Naive thymus-derived CD4-positive, alpha-beta T cell (primary cell): ENCODE measurements at regions of chr22 and their contacts with region 1.

Region 1: DNA sequence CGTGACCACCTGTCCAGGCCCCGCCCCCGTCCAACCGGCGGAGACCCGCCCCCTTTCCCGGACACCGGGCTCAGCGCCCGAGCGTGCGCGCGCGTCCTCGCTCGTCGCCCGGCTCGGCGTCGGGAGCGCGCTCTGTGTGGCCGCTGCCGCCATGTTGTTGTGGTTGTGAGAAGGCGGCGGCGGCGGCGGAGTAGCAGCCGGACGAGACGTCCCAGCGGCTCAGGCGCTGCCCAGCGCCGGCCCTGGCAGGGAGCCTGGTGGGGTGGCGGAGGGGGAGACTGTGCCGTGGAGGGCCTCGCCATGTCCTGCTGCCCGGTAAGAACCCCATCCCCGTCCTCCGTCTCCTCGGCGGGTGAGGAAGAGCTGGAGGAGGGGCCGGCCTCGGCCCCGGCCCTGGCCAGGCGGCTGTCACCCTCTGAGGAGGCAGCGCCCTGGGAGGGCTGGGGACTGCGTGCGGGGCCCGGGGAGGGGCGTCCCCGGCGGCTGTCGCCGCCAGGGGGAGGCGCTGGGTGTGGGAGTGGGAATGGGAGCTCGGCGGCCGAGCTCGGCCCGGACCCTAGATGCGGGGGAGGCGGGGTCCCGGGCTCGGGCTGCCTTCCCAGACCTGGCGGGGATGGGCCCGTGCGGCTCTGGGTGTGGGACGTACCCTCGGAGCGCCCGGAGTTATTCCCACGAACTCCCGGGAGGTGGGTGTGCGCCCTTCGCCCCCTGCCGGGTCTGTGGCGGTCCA is at the start of gene MTMR3:
- DNase-seq: peak; percentile 71 to 99 (median 82)
- ATAC-seq: peak; percentile 91
- H3K4me3 ChIP-seq: peak within 1 kb of the TSS; percentile 69
- H3K4me3 Mint-ChIP-seq: peak within 1 kb of the TSS in 7 of 10 donors; percentile 72 to 95 (median 92)
- H3K27ac ChIP-seq: peak within 1 kb of the TSS; percentile 93
- H3K27ac Mint-ChIP-seq: peak within 1 kb of the TSS; percentile 70 to 93 (median 84)
- H3K4me1 ChIP-seq: peaks cover 17 to 21% of the 10 kb centered on the region in 2 donors
- H3K4me1 Mint-ChIP-seq: peaks cover 0 to 12% (median 1%) of the 10 kb centered on the region in 7 donors
- H3K27me3 ChIP-seq: no peaks in the 10 kb centered on the region
- H3K27me3 Mint-ChIP-seq: peaks cover 0 to 3% (median 0%) of the 10 kb centered on the region in 5 donors
- total RNA-seq, gene MTMR3: 33.2 to 88.7 (median 64.6) TPM

Region 2: DNA sequence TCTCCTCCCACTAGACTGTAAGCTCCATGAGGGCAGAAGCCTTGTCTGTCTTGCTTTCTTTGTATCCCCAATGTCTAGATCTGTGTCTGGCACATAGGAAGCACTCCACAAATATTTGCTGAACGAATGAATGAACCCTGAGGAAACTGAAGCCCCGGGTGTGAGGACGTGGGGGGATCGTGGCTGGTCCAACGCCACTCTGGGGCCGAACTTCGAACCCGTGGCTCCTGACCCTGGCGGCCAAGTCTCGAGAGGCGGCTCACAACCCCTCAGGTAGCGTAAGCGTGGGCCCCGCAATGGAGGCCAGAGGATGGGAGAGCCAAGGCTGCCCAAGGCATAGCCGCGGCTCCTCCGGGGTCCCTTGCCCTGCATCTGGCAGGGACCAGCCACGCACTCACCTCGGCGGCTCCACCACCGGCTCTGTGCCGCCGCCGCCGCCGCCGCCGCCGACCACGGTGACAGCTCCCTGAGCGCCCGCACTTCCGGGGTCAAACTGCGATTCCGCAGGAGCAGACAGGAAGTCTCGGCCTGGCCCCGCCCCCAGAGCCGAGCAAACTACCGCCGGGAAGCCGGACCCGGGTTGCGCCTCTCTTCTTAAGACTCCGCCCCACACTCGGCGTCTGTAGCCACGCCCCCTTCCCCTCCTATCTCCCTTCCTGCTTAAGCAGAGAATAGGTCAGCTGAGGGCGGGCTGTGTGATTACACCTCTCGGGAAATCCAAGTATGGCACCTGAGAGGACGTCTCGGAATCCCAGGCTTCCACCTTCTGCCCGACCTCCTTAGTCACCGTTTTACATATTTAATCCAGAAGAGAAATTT is 45.2 kb before region 1 on chr22 and contains the start of gene ASCC2:
- CTCF ChIA-PET with region 1: no interaction called
- POLR2A ChIA-PET with region 1: interaction called, 5 read pairs
- intact Hi-C with region 1: loop called (anchors 1 kb)
- DNase-seq: peak; percentile 93 to 98 (median 97)
- ATAC-seq: peak; percentile 100
- H3K4me3 ChIP-seq: peak within 1 kb of the TSS; percentile 98
- H3K4me3 Mint-ChIP-seq: peak within 1 kb of the TSS; percentile 89 to 99 (median 95)
- H3K27ac ChIP-seq: peak within 1 kb of the TSS; percentile 79
- H3K27ac Mint-ChIP-seq: peak within 1 kb of the TSS; percentile 94 to 99 (median 95)
- H3K4me1 ChIP-seq: peaks cover 12 to 22% of the 10 kb centered on the region in 2 donors
- H3K4me1 Mint-ChIP-seq: peaks cover 31 to 55% (median 45%) of the 10 kb centered on the region in 7 donors
- H3K27me3 ChIP-seq: no peaks in the 10 kb centered on the region
- H3K27me3 Mint-ChIP-seq: no peaks in the 10 kb centered on the region
- total RNA-seq, gene ASCC2: 90.2 to 101 (median 93.8) TPM

Region 3: DNA sequence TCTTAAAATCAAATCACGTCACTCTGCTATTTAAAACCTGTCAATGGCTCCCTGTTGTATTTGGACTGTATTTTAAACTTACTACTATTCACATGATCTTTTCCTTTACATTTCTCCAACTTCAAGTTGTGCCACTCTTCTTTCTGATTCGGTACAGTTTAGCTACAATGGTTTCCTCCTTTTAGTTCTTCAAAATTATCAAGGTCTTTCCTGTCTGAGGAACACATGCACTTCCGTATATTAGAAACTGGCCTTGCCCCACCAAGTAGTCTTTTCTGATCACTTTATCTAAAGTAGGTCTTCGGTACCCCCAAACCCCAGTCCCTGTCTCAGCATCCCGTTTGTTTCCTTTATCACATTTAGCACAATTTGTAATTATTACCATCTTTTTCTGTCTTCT is 81.6 kb after region 1 on chr22:
- CTCF ChIA-PET with region 1: interaction called, 5 read pairs
- POLR2A ChIA-PET with region 1: no interaction called
- intact Hi-C with region 1: loop called in 1 of 2 experiments (anchors 10 kb)
- DNase-seq: no peak
- ATAC-seq: no peak
- H3K4me3 ChIP-seq: no peak overlapping the region
- H3K4me3 Mint-ChIP-seq: no peak overlapping the region
- H3K27ac ChIP-seq: no peak overlapping the region
- H3K27ac Mint-ChIP-seq: peak overlapping the region in 1 of 9 donors; percentile 5
- H3K4me1 ChIP-seq: no peaks in the 10 kb centered on the region
- H3K4me1 Mint-ChIP-seq: peaks cover 6 to 48% (median 38%) of the 10 kb centered on the region in 7 donors
- H3K27me3 ChIP-seq: no peaks in the 10 kb centered on the region
- H3K27me3 Mint-ChIP-seq: no peaks in the 10 kb centered on the region

Region 4: DNA sequence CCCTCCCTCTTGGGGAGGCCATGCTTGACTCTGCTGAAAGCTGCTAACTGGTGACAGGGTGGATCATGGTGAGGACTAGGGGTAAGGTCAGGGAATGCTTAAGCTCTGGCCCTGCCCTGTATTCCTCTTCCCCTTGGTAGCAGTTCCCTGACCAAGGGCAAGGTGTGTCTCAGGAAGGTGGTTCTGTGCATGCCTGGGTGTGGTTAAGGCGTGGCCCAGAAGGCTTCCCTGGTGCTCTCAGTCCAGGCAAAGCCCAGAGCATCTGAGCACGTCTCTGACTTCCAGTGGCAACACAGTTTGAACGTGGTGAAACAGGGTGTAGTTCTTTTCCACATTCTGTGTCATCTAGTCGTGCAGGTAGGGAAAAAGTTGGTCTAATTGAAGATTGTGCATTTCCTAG is 144.0 kb after region 1 on chr22:
- CTCF ChIA-PET with region 1: no interaction called
- POLR2A ChIA-PET with region 1: no interaction called
- intact Hi-C with region 1: no loop called
- DNase-seq: no peak
- ATAC-seq: no peak
- H3K4me3 ChIP-seq: no peak overlapping the region
- H3K4me3 Mint-ChIP-seq: no peak overlapping the region
- H3K27ac ChIP-seq: no peak overlapping the region
- H3K27ac Mint-ChIP-seq: peak overlapping the region in 3 of 9 donors; percentile 36 to 57 (median 49)
- H3K4me1 ChIP-seq: no peaks in the 10 kb centered on the region
- H3K4me1 Mint-ChIP-seq: peaks cover 0 to 21% (median 0%) of the 10 kb centered on the region in 7 donors
- H3K27me3 ChIP-seq: no peaks in the 10 kb centered on the region
- H3K27me3 Mint-ChIP-seq: no peaks in the 10 kb centered on the region